ENCODE measurements at regions of chr14 and their contacts with region 1.

Region 1: GRCh38 chr14:73058224-73058921 is at the start of gene RBM25:
- DNase-seq: peak; percentile 93 to 99 (median 96)

Region 2: GRCh38 chr14:72146241-72146640 is 912.1 kb before region 1 on chr14:
- intact Hi-C with region 1: no loop called
- DNase-seq: no peak

Region 3: DNA sequence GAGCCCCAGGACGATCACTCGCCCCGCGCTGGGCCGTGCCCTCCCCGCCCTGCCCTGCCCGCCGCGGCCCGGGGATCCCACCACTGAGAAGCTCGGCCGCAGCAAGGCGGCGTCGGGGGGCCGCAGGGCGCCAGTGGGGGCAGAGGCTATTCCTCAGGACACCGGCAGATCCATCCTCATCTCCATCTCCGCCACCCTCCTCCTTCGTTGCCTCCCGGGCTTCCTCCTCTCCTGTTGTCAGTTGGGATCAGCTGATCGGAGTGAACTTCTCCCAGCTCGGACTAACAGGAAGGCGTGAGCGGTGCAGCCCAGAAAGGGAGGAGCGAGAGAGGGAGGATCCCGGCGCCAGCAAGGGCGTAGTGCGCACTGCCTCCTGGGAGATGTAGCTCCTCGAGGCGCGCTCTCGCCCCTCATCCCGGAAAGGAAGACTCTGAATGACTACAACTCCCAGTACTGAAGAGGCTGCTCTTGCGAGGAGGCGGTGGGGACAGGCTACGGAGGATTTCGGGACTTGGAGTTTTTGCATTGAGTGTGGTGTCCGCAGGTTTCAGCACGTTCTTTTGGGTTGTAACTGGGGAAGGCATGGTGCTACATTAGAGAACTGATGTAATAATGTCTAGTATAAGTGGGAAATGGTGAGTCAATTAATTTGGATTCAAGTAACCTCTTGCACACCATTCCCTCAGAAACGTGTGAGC is 31.4 kb before region 1 on chr14 and contains the start of gene ZFYVE1:
- intact Hi-C with region 1: loop called (anchors 1 kb)
- DNase-seq: peak; percentile 96 to 100 (median 98)

Region 4: GRCh38 chr14:73136387-73137225 is 78.2 kb after region 1 on chr14 and contains the start of gene PSEN1:
- intact Hi-C with region 1: loop called (anchors 2 kb)
- DNase-seq: peak; percentile 95 to 100 (median 99)

Region 5: DNA sequence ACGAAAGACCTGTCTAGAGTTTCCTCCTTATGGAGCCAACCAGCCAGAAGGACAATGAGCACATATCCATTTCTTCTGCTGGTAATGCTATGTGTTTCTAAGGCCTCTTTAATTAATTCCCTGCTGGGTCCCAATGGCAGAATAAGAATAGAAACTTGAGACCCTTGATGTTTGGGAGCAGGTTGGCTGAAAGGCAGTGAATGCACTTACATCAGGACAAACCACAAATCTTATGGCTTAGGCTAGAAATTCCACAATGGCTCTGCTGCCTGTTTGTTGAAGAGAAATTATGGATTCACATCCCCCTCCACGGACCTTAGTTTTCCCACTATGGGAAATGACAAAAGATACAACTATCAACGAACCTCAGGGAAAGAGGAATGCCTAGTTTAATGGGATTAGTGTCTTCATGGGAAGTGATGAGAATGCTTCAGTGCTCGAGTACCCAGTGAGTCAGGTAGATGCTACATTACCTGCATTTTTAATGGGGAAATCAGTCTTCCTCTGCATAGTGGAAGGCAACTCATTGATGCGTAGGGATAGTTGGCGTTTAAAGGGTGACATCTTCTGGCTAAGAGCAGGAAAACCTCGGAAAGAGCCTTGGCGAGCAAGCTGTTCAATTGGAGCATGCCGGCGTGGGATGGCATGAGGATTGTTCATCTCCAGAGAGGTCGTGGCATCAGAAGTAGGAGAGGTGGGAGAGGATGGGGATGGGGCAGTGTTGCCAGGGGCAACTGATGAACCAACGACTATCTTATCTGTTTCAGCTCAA is 225.4 kb after region 1 on chr14:
- intact Hi-C with region 1: loop called (anchors 10 kb)
- DNase-seq: peak in 3 of 10 donors; percentile 26 to 84 (median 42)